ENCODE measurements at regions of chr3 and their contacts with region 1.

Region 1: GRCh38 chr3:69212411-69213139 is 90.2 kb upstream of the LMOD3 start:
- DNase-seq: peak; percentile 71
- H3K4me3 Mint-ChIP-seq: peak overlapping the region; percentile 62
- H3K27ac Mint-ChIP-seq: peak overlapping the region; percentile 90
- H3K4me1 Mint-ChIP-seq: peaks cover 50% of the 10 kb centered on the region
- H3K27me3 Mint-ChIP-seq: no peaks in the 10 kb centered on the region

Region 2: GRCh38 chr3:69250014-69250413 is 37.4 kb after region 1 on chr3:
- intact Hi-C with region 1: loop called (anchors 2 kb)
- DNase-seq: peak; percentile 88
- H3K4me3 Mint-ChIP-seq: peak overlapping the region; percentile 70
- H3K27ac Mint-ChIP-seq: peak overlapping the region; percentile 1
- H3K4me1 Mint-ChIP-seq: peaks cover 9% of the 10 kb centered on the region
- H3K27me3 Mint-ChIP-seq: peaks cover 5% of the 10 kb centered on the region

Region 3: DNA sequence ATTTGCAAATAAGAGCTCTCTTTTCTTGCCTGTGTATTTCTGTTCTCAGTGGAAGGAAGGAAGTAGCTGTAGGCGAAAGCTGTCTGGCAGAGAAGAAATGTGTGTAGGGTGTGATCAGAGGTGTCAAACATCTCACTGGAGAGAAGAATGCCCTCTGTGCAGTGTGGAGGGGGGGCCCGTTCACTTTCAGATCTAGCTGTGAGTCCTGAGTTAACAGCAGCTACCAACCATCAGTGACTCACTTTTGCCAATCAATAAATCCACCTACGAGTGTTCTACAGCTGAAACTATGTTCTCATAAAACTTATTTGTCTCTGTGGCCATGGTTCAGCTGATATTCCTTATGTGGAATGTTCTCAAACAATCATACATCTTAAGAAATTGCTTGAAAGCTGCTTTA is 69.6 kb after region 1 on chr3:
- intact Hi-C with region 1: loop called (anchors 1 kb)
- DNase-seq: peak; percentile 69
- H3K4me3 Mint-ChIP-seq: peak overlapping the region; percentile 50
- H3K27ac Mint-ChIP-seq: peak overlapping the region; percentile 87
- H3K4me1 Mint-ChIP-seq: peaks cover 18% of the 10 kb centered on the region
- H3K27me3 Mint-ChIP-seq: peaks cover under 1% of the 10 kb centered on the region

Region 4: DNA sequence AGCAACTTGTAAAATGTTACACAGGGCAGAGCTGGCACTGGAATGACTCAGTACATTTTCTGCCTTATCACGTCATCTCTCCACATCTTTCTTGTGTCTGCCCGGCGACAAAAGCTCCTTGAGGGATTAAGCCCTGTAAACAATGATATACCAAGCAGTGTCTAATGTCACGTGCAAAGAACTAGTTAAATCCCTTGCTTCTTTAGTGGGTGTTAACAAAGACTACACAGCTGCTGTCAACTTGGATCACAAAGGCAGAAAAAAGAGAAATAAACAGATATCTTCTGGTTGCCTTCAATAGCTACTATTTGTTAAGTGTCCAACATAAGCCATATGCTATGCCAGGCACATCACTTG is 221.4 kb after region 1 on chr3:
- intact Hi-C with region 1: loop called (anchors 1 kb)
- DNase-seq: no peak
- H3K4me3 Mint-ChIP-seq: no peak overlapping the region
- H3K27ac Mint-ChIP-seq: peak overlapping the region; percentile 76
- H3K4me1 Mint-ChIP-seq: peaks cover 40% of the 10 kb centered on the region
- H3K27me3 Mint-ChIP-seq: peaks cover 3% of the 10 kb centered on the region

Measured in activated CD4-positive, alpha-beta T cell treated with anti-CD3 and anti-CD28 coated beads, Interleukin-2, amount 10 ng/mL, durations not matched to agents 24 days and 14 days (primary cell).